Colonic mucosa (tissue), 4 donors: ENCODE measurements at regions of chr2 and their contacts with region 1.

Region 1: DNA sequence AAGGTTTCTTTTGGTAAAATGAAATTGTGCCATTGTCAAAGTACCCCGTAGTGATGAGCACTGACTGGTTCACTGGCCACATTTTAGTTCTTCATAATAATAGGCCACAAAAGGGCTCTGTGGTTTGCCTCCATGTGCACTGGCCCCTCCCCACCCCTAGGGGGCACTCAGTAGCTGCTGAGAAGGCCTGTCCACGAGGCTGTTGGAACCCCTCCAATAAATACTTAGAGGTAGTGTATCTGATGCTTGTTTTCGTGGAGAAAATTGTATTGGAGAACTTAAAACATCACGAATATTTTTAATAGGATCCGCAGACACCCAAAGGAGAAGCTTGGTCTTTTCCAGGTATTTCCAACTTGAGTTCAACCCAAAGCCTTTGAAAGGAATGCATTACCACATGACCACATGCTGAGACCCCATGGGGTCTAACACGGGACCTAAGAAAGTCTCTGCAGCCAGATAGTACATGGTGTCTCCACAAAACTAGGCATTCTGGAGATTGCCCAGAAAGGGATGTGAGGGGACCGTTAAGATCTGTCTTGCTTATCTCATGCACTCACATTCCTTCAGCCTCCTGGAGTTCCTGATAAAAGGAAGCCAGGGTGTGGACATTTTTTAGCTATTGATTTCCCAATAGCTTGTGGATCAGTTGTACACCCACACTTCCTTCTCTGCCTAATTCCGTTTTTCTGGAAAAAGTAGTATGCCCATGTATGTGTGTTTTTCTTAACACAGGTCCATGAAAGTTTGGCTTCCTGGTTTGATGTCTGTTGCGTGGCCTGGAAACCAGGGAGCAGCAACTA is 28.5 kb upstream of the NOSTRIN start:
- DNase-seq: peak; percentile 76
- H3K4me3 ChIP-seq: no peak overlapping the region
- H3K27ac ChIP-seq: no peak overlapping the region
- H3K4me1 ChIP-seq: no peaks in the 10 kb centered on the region
- H3K27me3 ChIP-seq: no peaks in the 10 kb centered on the region
- CTCF ChIP-seq: peak; percentile 77

Region 2: DNA sequence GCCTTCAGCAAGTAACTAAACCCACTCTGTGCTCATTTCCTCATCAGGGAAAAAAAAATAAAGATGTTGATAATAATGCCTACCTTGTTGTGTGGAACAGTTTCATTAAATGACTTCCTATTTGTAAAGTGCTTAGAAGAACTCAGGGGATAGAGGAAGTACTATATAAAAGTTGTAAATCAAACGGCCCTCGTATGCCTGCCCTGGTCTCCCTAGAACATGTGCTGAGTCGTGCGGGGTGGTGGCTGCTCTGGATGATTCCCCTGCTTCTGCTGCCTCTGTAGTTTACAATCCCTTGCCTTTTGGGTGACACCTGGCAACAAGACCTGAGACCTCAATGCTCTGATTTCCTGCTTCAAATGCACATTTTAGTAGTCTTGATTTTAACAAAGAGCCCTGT is 147.8 kb before region 1 on chr2:
- intact Hi-C with region 1: no loop called
- DNase-seq: peak; percentile 48
- H3K4me3 ChIP-seq: no peak overlapping the region
- H3K27ac ChIP-seq: peak overlapping the region; percentile 32
- H3K4me1 ChIP-seq: no peaks in the 10 kb centered on the region
- H3K27me3 ChIP-seq: no peaks in the 10 kb centered on the region
- CTCF ChIP-seq: no peak

Region 3: GRCh38 chr2:168649105-168649504 is 124.8 kb before region 1 on chr2:
- intact Hi-C with region 1: no loop called
- DNase-seq: no peak
- H3K4me3 ChIP-seq: no peak overlapping the region
- H3K27ac ChIP-seq: no peak overlapping the region
- H3K4me1 ChIP-seq: no peaks in the 10 kb centered on the region
- H3K27me3 ChIP-seq: no peaks in the 10 kb centered on the region
- CTCF ChIP-seq: no peak

Region 4: GRCh38 chr2:168819829-168820489 is 46.0 kb after region 1 on chr2:
- intact Hi-C with region 1: loop called (anchors 10 kb)
- DNase-seq: no peak
- H3K4me3 ChIP-seq: no peak overlapping the region
- H3K27ac ChIP-seq: no peak overlapping the region
- H3K4me1 ChIP-seq: no peaks in the 10 kb centered on the region
- H3K27me3 ChIP-seq: no peaks in the 10 kb centered on the region
- CTCF ChIP-seq: no peak

Region 5: DNA sequence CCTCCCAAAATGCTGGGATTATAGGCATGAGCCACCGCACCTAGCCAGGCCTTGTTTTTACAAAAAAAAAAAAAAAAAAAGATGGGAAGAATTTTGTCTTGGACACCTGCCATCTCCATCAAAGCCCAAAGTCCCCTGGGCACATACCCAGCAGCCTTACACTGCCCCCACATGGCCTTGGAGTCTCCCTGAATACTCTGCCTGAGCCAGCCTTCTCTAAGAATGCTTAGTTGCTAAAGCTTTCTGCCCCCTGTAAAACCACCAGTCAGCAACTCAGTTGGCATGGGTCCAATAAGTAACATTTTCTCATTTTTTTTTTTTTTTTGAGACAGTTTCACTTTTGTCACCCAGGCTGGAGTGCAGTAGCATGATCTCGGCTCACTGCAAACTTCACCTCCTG is 75.7 kb after region 1 on chr2:
- intact Hi-C with region 1: loop called (anchors 5 kb)
- DNase-seq: peak; percentile 55
- H3K4me3 ChIP-seq: no peak overlapping the region
- H3K27ac ChIP-seq: no peak overlapping the region
- H3K4me1 ChIP-seq: no peaks in the 10 kb centered on the region
- H3K27me3 ChIP-seq: no peaks in the 10 kb centered on the region
- CTCF ChIP-seq: peak; percentile 32

Region 6: DNA sequence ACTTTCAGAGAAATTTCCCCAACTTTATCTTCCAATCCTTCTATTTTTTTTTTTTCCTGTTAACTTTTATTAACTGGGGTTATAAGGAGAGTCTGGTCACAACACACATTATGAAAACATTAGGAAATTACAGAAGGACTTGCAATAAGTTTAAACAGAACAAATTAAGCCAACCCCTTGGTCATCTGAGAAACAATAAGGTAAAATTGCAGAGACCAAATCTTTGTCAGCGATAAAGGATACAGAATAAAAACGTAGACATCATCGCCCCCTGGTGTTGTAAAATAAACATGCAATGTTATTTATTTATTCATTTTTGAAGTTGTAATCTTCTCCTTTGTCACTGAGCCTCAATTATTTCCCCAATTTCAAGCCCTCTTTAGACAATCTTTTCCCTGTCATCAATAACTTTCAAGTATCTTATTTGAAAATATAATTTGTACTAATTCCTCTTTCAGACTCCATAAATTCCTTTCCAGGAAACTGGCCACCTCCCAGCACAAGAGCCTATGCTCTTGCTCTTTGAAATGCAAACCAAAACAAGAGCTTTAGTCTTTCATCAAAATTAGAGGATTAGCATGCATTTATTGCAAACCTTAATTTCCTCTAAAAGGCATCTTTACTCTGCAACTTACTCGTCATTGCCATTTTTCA is 146.7 kb after region 1 on chr2:
- intact Hi-C with region 1: loop called (anchors 2 kb)
- DNase-seq: no peak
- H3K4me3 ChIP-seq: no peak overlapping the region
- H3K27ac ChIP-seq: no peak overlapping the region
- H3K4me1 ChIP-seq: no peaks in the 10 kb centered on the region
- H3K27me3 ChIP-seq: no peaks in the 10 kb centered on the region
- CTCF ChIP-seq: peak; percentile 71

Region 7: DNA sequence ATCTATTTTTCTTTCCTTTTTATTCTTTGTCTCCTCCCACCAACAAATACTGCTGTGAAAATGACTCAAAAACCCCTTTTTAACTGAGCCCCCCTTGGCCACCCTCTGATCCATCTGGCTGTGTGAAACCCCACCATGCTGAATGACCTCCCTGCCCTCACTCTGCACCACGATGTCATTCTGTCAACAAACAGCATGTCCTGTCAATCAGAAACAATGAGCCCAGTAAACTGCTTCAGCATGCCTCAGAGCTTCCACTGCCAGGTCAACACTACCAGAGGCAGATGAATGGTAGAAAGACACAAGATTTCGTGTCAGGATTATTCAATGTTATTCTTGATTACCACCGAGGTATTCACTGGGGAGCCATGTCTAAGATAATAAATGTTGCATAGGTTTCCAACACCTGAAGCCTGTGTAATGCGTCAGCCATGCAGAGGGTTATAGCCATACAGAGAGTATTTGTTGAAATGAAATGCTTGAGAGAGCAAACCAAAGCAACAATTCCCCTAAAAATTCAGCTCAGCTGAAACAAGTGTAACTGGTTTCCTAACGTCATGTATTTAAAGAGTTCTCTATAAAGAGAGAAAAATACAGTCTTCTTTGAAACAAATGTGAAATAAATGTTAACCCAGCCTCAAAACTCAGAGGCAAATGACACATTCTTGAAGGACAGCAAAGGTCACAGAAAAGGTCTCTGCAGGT is 511.8 kb after region 1 on chr2:
- intact Hi-C with region 1: no loop called
- DNase-seq: no peak
- H3K4me3 ChIP-seq: no peak overlapping the region
- H3K27ac ChIP-seq: no peak overlapping the region
- H3K4me1 ChIP-seq: no peaks in the 10 kb centered on the region
- H3K27me3 ChIP-seq: no peaks in the 10 kb centered on the region
- CTCF ChIP-seq: no peak